ENCODE measurements at regions of chr1 and their contacts with region 1.

Region 1: GRCh38 chr1:198638894-198639635 is at the start of gene PTPRC:
- DNase-seq: peak in 2 of 9 experiments; percentile 67 to 85
- ATAC-seq: peak; percentile 79
- H3K4me3 ChIP-seq: peak within 1 kb of the TSS; percentile 76 to 83
- H3K4me3 Mint-ChIP-seq: peak within 1 kb of the TSS; percentile 85
- H3K27ac ChIP-seq: peak within 1 kb of the TSS; percentile 80 to 82
- H3K27ac Mint-ChIP-seq: peak within 1 kb of the TSS; percentile 92
- H3K4me1 ChIP-seq: peaks cover 45% of the 10 kb centered on the region
- H3K4me1 Mint-ChIP-seq: peaks cover 56% of the 10 kb centered on the region
- H3K27me3 ChIP-seq: no peaks in the 10 kb centered on the region
- H3K27me3 Mint-ChIP-seq: no peaks in the 10 kb centered on the region
- CTCF ChIP-seq: no peak
- total RNA-seq, gene PTPRC: 603 to 634 TPM

Region 2: DNA sequence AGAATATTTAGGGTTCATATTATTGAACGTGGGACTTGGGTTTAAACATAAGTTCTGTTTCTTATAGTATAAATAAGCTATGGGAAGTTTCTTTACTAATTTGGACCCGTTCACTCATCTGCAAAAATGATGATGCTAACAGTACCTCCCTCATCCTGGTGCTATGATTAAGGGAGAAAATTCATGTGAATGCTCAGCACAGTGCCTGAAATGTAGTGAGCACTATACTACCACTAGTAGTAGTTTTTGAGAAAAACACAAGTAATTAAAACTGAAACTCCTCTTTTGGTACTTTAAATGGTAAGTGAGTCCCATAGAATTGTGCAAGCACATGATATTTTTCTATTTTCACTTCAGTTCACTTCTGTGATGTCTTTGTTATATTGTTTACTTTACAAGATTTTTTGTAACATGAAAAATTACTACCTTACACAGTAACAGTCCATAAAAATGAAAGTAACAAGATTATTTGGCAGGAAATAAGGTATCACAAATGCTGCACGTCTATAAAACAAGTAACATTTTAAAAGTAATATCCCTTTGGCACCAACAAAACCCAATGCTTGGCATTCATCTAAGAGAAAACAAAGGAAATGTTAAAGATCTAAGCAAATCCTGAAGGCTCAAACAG is 11.5 kb before region 1 on chr1:
- CTCF ChIA-PET with region 1: interaction called, 62 read pairs
- POLR2A ChIA-PET with region 1: interaction called, 105 read pairs
- intact Hi-C with region 1: loop called in 1 of 2 experiments (anchors 1 kb)
- DNase-seq: peak in 1 of 9 experiments; percentile 59
- ATAC-seq: peak; percentile 55
- H3K4me3 ChIP-seq: peak overlapping the region; percentile 2 to 4
- H3K4me3 Mint-ChIP-seq: peak overlapping the region; percentile 40
- H3K27ac ChIP-seq: peak overlapping the region; percentile 6 to 72
- H3K27ac Mint-ChIP-seq: peak overlapping the region; percentile 85
- H3K4me1 ChIP-seq: peaks cover 97% of the 10 kb centered on the region
- H3K4me1 Mint-ChIP-seq: peaks cover 96% of the 10 kb centered on the region
- H3K27me3 ChIP-seq: no peaks in the 10 kb centered on the region
- H3K27me3 Mint-ChIP-seq: no peaks in the 10 kb centered on the region
- CTCF ChIP-seq: no peak

Region 3: GRCh38 chr1:198651650-198652400 is 12.8 kb after region 1 on chr1:
- CTCF ChIA-PET with region 1: interaction called, 4 read pairs
- POLR2A ChIA-PET with region 1: interaction called, 7 read pairs
- intact Hi-C with region 1: loop called in 1 of 2 experiments (anchors 1 kb)
- DNase-seq: peak in 1 of 9 experiments; percentile 58
- ATAC-seq: peak; percentile 13
- H3K4me3 ChIP-seq: peak overlapping the region; percentile 29 to 30
- H3K4me3 Mint-ChIP-seq: peak overlapping the region; percentile 75
- H3K27ac ChIP-seq: peak overlapping the region; percentile 41 to 97
- H3K27ac Mint-ChIP-seq: peak overlapping the region; percentile 95
- H3K4me1 ChIP-seq: peaks cover 79% of the 10 kb centered on the region
- H3K4me1 Mint-ChIP-seq: peaks cover 73% of the 10 kb centered on the region
- H3K27me3 ChIP-seq: no peaks in the 10 kb centered on the region
- H3K27me3 Mint-ChIP-seq: no peaks in the 10 kb centered on the region
- CTCF ChIP-seq: no peak

Region 4: DNA sequence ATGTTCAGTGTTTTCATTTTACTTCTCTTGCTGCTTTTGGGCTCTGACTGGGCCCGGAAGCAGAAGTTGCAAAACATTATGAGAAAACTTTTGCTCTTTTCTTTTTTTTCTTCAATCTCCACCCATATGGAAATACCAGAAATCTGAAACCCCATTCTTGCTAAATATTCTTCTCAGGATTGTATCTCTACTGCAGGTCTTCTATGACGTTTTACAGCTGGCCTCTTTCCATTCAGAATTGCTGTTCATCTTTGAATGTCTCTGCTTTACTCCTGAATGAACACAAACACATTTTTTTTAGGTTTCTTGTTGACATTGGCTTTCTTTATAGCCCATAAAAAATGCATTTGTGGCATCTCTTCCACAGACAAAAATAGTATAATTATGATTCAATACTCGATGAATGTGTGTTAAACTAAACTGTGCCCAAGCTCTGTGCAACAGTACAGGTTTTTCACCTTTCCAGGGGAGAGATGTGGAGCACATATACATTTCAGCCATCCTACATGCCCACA is 18.5 kb after region 1 on chr1:
- CTCF ChIA-PET with region 1: no interaction called
- POLR2A ChIA-PET with region 1: interaction called, 4 read pairs
- intact Hi-C with region 1: loop called in 1 of 2 experiments (anchors 1 kb)
- DNase-seq: peak in 3 of 9 experiments; percentile 47 to 87 (median 73)
- ATAC-seq: peak; percentile 23
- H3K4me3 ChIP-seq: peak overlapping the region; percentile 18 to 26
- H3K4me3 Mint-ChIP-seq: peak overlapping the region; percentile 74
- H3K27ac ChIP-seq: peak overlapping the region; percentile 64 to 97
- H3K27ac Mint-ChIP-seq: peak overlapping the region; percentile 98
- H3K4me1 ChIP-seq: peaks cover 84% of the 10 kb centered on the region
- H3K4me1 Mint-ChIP-seq: peaks cover 71% of the 10 kb centered on the region
- H3K27me3 ChIP-seq: no peaks in the 10 kb centered on the region
- H3K27me3 Mint-ChIP-seq: no peaks in the 10 kb centered on the region
- CTCF ChIP-seq: no peak